CD8-positive, alpha-beta memory T cell (primary cell): ENCODE measurements at regions of chr1 and their contacts with region 1.

Region 1: DNA sequence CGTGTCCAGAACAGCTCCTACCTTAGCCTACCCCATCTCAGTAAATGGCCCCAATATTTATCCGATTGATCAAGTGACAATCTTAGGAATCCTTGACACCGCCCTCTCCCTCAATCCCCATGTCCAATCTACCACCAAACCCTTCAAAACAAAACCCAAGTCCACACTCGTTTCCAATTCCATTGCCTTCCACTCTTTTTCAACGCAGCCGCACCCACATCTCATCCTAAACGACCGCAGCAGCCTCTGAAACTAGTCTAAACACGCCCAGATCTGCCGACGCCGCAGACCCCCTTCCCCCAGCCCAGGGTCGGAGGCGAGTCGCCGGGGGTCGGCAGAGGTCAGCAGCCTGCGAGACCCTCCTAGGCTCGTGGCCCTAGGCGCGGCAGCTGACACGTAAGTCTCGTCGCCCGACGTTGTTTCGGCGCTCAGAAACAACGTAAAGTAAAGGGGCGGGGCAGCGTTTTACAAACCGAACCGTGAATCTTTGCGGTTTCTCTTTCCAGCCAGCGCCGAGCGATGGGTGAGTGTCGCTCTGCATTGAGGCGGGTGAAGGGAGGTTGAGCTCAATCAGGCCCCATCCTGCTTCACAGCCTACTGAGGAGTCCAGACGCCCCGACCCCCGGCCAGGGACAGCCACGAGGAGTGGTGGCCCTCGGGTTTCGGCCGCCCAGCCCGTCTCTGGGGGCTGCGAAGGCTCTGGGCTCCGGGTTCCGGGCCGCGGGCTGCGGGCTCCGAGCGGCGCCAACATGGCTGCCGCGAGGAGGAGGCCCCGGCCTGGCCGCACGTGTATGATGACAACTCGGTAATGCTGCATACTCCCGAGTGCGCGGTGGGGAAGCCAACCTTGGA is at the start of gene RPS8:
- DNase-seq: peak; percentile 76 to 92 (median 84)
- H3K4me3 ChIP-seq: peak within 1 kb of the TSS; percentile 95
- H3K4me3 Mint-ChIP-seq: peak within 1 kb of the TSS; percentile 90 to 99 (median 94)
- H3K27ac ChIP-seq: peak within 1 kb of the TSS; percentile 92
- H3K27ac Mint-ChIP-seq: peak within 1 kb of the TSS; percentile 93 to 99 (median 97)
- H3K4me1 ChIP-seq: peaks cover 27% of the 10 kb centered on the region
- H3K4me1 Mint-ChIP-seq: peaks cover 39 to 43% (median 42%) of the 10 kb centered on the region in 3 donors
- H3K27me3 ChIP-seq: no peaks in the 10 kb centered on the region
- H3K27me3 Mint-ChIP-seq: no peaks in the 10 kb centered on the region
- total RNA-seq, gene RPS8: 2,426 to 2,465 TPM

Region 2: GRCh38 chr1:44730741-44731512 is 44.4 kb before region 1 on chr1 and contains the start of gene RNU5D-1:
- CTCF ChIA-PET with region 1: interaction called, 21 read pairs
- POLR2A ChIA-PET with region 1: interaction called, 21 read pairs
- DNase-seq: peak; percentile 88 to 94 (median 90)
- H3K4me3 ChIP-seq: peak within 1 kb of the TSS; percentile 37
- H3K4me3 Mint-ChIP-seq: peak within 1 kb of the TSS; percentile 63 to 86 (median 78)
- H3K27ac ChIP-seq: peak within 1 kb of the TSS; percentile 97
- H3K27ac Mint-ChIP-seq: peak within 1 kb of the TSS; percentile 96 to 100 (median 100)
- H3K4me1 ChIP-seq: peaks cover 14% of the 10 kb centered on the region
- H3K4me1 Mint-ChIP-seq: peaks cover 19 to 36% (median 28%) of the 10 kb centered on the region in 3 donors
- H3K27me3 ChIP-seq: no peaks in the 10 kb centered on the region
- H3K27me3 Mint-ChIP-seq: no peaks in the 10 kb centered on the region
- total RNA-seq, gene RNU5D-1: not detected

Region 3: GRCh38 chr1:44799770-44800584 is 24.7 kb after region 1 on chr1 and contains the start of gene PLK3:
- CTCF ChIA-PET with region 1: interaction called, 13 read pairs
- POLR2A ChIA-PET with region 1: interaction called, 6 read pairs
- DNase-seq: peak; percentile 97 to 99 (median 98)
- H3K4me3 ChIP-seq: peak within 1 kb of the TSS; percentile 90
- H3K4me3 Mint-ChIP-seq: peak within 1 kb of the TSS; percentile 80 to 98 (median 96)
- H3K27ac ChIP-seq: peak within 1 kb of the TSS; percentile 93
- H3K27ac Mint-ChIP-seq: peak within 1 kb of the TSS; percentile 90 to 99 (median 98)
- H3K4me1 ChIP-seq: peaks cover 31% of the 10 kb centered on the region
- H3K4me1 Mint-ChIP-seq: peaks cover 25 to 41% (median 38%) of the 10 kb centered on the region in 3 donors
- H3K27me3 ChIP-seq: no peaks in the 10 kb centered on the region
- H3K27me3 Mint-ChIP-seq: no peaks in the 10 kb centered on the region
- total RNA-seq, gene PLK3: 104 to 114 TPM

Region 4: GRCh38 chr1:44819608-44820327 is 44.5 kb after region 1 on chr1:
- CTCF ChIA-PET with region 1: interaction called, 3 read pairs
- POLR2A ChIA-PET with region 1: interaction called, 17 read pairs
- DNase-seq: peak; percentile 65 to 89 (median 85)
- H3K4me3 ChIP-seq: peak overlapping the region; percentile 72
- H3K4me3 Mint-ChIP-seq: peak overlapping the region; percentile 91 to 98 (median 95)
- H3K27ac ChIP-seq: peak overlapping the region; percentile 99
- H3K27ac Mint-ChIP-seq: peak overlapping the region; percentile 100
- H3K4me1 ChIP-seq: peaks cover 14% of the 10 kb centered on the region
- H3K4me1 Mint-ChIP-seq: peaks cover 32 to 44% (median 40%) of the 10 kb centered on the region in 3 donors
- H3K27me3 ChIP-seq: no peaks in the 10 kb centered on the region
- H3K27me3 Mint-ChIP-seq: no peaks in the 10 kb centered on the region